AG04450 (cell line): ENCODE measurements at regions of chr1 and their contacts with region 1.

Region 1: DNA sequence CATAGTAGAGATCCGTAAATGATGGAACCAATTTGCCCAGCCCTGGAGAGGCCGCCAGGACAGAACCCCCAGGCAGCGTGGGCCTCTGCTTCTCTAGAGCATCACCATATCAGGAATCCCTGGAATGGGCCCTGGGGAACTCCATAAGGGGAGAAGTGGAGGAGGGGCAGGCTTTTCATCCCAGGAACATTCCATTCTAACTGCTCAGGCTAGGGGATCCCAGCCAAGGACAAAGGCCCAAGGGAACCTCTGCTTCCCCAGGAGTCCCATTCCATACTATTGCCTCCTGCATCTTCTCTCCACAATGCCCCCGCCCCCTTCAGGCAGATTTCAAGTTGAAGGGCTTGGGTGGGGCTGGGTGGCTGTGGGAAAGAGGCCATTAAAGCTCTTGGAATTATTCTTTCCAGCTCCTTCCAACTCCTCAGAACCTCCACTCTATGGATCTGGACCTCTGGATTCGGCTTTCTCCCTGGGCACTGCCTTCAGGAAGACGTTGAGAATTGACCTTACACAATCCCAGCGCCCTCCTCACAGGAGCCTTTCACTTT is 6.0 kb downstream of the TRNP1 start:
- DNase-seq: peak; percentile 95
- H3K4me3 ChIP-seq: no peak overlapping the region
- H3K27ac ChIP-seq: peak overlapping the region; percentile 95
- H3K27me3 ChIP-seq: no peaks in the 10 kb centered on the region
- CTCF ChIP-seq: 0 out of 2 replicates have a peak, but pooled peaks have one; percentile 1

Region 2: GRCh38 chr1:26060832-26061574 is 938.5 kb before region 1 on chr1:
- CTCF ChIA-PET with region 1: no interaction called
- POLR2A ChIA-PET with region 1: no interaction called
- DNase-seq: no peak
- H3K4me3 ChIP-seq: no peak overlapping the region
- H3K27ac ChIP-seq: no peak overlapping the region
- H3K27me3 ChIP-seq: peaks cover 50% of the 10 kb centered on the region
- CTCF ChIP-seq: no peak

Region 3: DNA sequence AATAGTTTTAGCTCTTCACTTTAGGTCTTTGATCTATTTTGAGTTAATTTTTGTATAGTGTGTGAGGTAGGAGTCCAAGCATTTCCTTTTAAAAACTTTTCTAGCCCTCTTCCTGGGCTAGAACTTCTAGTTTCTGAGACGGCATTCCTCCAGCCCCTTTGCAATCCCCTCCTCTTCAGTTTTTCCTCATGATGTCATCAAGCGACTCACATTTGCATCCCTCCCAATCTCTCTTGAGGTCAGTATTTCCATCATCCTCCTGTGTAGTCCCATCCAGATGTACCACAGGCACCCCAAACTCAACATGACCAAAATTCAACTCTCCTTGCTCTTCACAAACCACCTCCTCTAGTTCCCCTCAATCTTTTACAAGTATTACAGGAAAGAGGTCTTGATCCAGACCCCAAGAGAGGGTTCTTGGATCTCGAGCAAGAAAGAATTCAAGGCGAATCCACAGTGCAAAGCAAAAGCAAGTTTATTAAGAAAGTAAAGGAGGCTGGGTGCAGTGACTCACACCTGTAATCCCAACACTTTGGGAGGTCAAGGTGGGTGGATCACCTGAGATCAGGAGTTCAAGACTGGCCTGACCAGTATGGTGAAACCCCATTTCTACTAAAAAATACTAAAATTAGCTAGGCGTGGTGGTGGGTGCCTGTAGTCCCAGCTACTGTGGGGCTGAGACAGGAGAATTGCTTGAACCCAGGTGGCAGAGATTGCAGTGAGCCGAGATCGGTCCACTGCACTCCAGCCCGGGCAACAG is 516.4 kb before region 1 on chr1:
- CTCF ChIA-PET with region 1: no interaction called
- POLR2A ChIA-PET with region 1: no interaction called
- DNase-seq: no peak
- H3K4me3 ChIP-seq: no peak overlapping the region
- H3K27ac ChIP-seq: no peak overlapping the region
- H3K27me3 ChIP-seq: no peaks in the 10 kb centered on the region
- CTCF ChIP-seq: no peak

Region 4: GRCh38 chr1:26986658-26987057 is 12.9 kb before region 1 on chr1:
- CTCF ChIA-PET with region 1: interaction called, 16 read pairs
- POLR2A ChIA-PET with region 1: no interaction called
- DNase-seq: no peak
- H3K4me3 ChIP-seq: no peak overlapping the region
- H3K27ac ChIP-seq: no peak overlapping the region
- H3K27me3 ChIP-seq: no peaks in the 10 kb centered on the region
- CTCF ChIP-seq: no peak

Region 5: GRCh38 chr1:27018316-27018715 is 18.8 kb after region 1 on chr1:
- CTCF ChIA-PET with region 1: interaction called, 10 read pairs
- POLR2A ChIA-PET with region 1: no interaction called
- DNase-seq: no peak
- H3K4me3 ChIP-seq: no peak overlapping the region
- H3K27ac ChIP-seq: no peak overlapping the region
- H3K27me3 ChIP-seq: no peaks in the 10 kb centered on the region
- CTCF ChIP-seq: no peak

Region 6: GRCh38 chr1:27097484-27097917 is 98.0 kb after region 1 on chr1:
- CTCF ChIA-PET with region 1: interaction called, 60 read pairs
- POLR2A ChIA-PET with region 1: no interaction called
- DNase-seq: peak; percentile 44
- H3K4me3 ChIP-seq: no peak overlapping the region
- H3K27ac ChIP-seq: no peak overlapping the region
- H3K27me3 ChIP-seq: no peaks in the 10 kb centered on the region
- CTCF ChIP-seq: peak; percentile 97

Region 7: GRCh38 chr1:27145934-27146354 is 146.4 kb after region 1 on chr1:
- CTCF ChIA-PET with region 1: no interaction called
- POLR2A ChIA-PET with region 1: no interaction called
- DNase-seq: peak; percentile 61
- H3K4me3 ChIP-seq: no peak overlapping the region
- H3K27ac ChIP-seq: peak overlapping the region; percentile 84
- H3K27me3 ChIP-seq: no peaks in the 10 kb centered on the region
- CTCF ChIP-seq: no peak

Region 8: GRCh38 chr1:27306892-27307761 is 307.6 kb after region 1 on chr1:
- CTCF ChIA-PET with region 1: no interaction called
- POLR2A ChIA-PET with region 1: no interaction called
- DNase-seq: no peak
- H3K4me3 ChIP-seq: no peak overlapping the region
- H3K27ac ChIP-seq: no peak overlapping the region
- H3K27me3 ChIP-seq: no peaks in the 10 kb centered on the region
- CTCF ChIP-seq: 0 out of 2 replicates have a peak, but pooled peaks have one; percentile 3